ENCODE measurements at regions of chr5 and their contacts with region 1.

Region 1: DNA sequence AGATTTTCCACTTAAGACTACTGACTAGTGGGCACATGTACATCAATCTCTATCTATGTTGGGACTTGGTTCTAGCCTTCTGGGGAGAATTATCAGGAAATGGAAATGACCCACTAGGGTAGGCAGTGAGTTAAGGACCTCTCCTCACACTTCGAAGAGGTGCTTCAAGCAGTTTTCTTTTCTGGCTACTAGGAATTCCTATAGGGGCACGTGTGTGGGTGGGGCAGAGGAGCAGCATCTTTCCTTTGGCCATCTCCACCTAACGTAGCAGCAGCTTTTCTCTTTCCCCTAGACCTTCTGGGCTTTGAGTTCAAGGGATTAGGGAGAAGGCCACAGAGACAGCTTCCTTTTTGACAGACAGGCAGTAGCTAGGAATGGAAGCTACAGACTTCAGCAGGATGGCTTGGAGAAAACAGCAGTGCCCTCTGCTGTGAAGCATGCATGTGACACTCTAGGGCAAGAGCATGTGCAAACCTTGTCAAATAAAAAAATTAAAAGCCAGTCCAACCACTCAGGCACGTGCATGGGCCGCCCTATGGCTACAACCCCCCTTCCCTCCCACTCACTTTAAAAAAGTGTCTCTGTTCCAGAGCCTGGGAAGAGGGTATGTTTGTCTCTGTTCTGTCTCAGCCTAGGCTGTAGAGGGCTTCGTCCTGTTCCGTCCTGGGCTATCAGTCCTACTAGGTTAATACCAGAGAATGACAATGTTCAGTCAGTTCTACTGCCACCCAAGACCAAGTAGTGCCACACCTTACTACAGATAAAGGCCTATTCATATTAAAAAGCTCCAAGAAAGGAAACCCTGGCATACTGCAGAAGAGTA is 8.7 kb upstream of the GFRA3 start:
- DNase-seq: peak; percentile 34
- ATAC-seq: peak; percentile 95
- H3K4me3 ChIP-seq: no peak overlapping the region
- H3K27ac ChIP-seq: no peak overlapping the region
- H3K4me1 ChIP-seq: peaks cover 0 to 3% of the 10 kb centered on the region in 2 experiments; a peak in 1 of 4 replicates
- H3K27me3 ChIP-seq: no peaks in the 10 kb centered on the region
- CTCF ChIP-seq: peak; percentile 53 to 69 (median 55)
- POLR2A ChIP-seq: no peak
- RAD21 ChIP-seq: peak; percentile 71

Region 2: GRCh38 chr5:138223532-138223931 is 59.6 kb before region 1 on chr5:
- CTCF ChIA-PET with region 1: interaction called, 21 read pairs
- POLR2A ChIA-PET with region 1: no interaction called
- RAD21 ChIA-PET with region 1: no interaction called
- intact Hi-C with region 1: loop called (anchors 1 kb)
- DNase-seq: no peak
- ATAC-seq: no peak
- H3K4me3 ChIP-seq: no peak overlapping the region
- H3K27ac ChIP-seq: no peak overlapping the region
- H3K4me1 ChIP-seq: peaks cover 0 to 4% of the 10 kb centered on the region in 2 experiments; a peak in 2 of 4 replicates
- H3K27me3 ChIP-seq: no peaks in the 10 kb centered on the region
- CTCF ChIP-seq: no peak
- POLR2A ChIP-seq: no peak
- RAD21 ChIP-seq: no peak